PC-9 (cell line): ENCODE measurements at regions of chr20 and their contacts with region 1.

Region 1: GRCh38 chr20:41425180-41425884 is 58.7 kb upstream of the EMILIN3 start:
- DNase-seq: no peak
- H3K4me3 ChIP-seq: no peak overlapping the region
- H3K27ac ChIP-seq: no peak overlapping the region
- H3K4me1 ChIP-seq: no peaks in the 10 kb centered on the region
- H3K27me3 ChIP-seq: no peaks in the 10 kb centered on the region
- CTCF ChIP-seq: no peak

Region 2: DNA sequence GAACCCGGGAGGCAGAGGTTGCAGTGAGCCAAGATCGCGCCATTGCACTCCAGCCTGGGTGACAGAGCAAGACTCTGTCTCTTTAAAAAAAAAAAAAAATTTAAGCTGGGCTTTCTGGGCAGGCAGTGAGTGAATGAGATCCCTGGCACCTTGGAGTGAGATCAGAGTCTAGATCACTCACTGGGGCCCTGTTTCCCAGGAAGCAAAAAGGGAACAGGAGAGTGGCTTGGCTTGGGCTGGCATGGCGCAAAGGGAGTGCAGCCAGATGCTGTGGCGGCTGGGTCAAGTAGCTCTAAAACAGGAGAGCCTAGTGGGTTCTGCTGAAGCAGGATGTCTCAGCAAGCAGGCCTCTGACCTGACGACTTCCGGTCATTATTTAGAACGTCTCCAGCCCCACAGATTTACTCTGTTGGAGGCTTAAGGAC is 277.6 kb before region 1 on chr20:
- CTCF ChIA-PET with region 1: no interaction called
- POLR2A ChIA-PET with region 1: interaction called, 16 read pairs
- intact Hi-C with region 1: no loop called
- DNase-seq: no peak
- H3K4me3 ChIP-seq: no peak overlapping the region
- H3K27ac ChIP-seq: no peak overlapping the region
- H3K4me1 ChIP-seq: peaks cover 7% of the 10 kb centered on the region; the same call in 1 of the 2 replicates
- H3K27me3 ChIP-seq: no peaks in the 10 kb centered on the region
- CTCF ChIP-seq: no peak

Region 3: GRCh38 chr20:41365777-41366598 is 59.3 kb before region 1 on chr20:
- CTCF ChIA-PET with region 1: no interaction called
- POLR2A ChIA-PET with region 1: no interaction called
- intact Hi-C with region 1: no loop called
- DNase-seq: no peak
- H3K4me3 ChIP-seq: no peak overlapping the region
- H3K27ac ChIP-seq: no peak overlapping the region
- H3K4me1 ChIP-seq: no peaks in the 10 kb centered on the region
- H3K27me3 ChIP-seq: peaks cover under 1% of the 10 kb centered on the region; the same call in 1 of the 2 replicates
- CTCF ChIP-seq: no peak

Region 4: GRCh38 chr20:41456351-41456750 is 31.0 kb after region 1 on chr20:
- CTCF ChIA-PET with region 1: interaction called, 19 read pairs
- POLR2A ChIA-PET with region 1: no interaction called
- intact Hi-C with region 1: no loop called
- DNase-seq: no peak
- H3K4me3 ChIP-seq: no peak overlapping the region
- H3K27ac ChIP-seq: no peak overlapping the region
- H3K4me1 ChIP-seq: no peaks in the 10 kb centered on the region
- H3K27me3 ChIP-seq: no peaks in the 10 kb centered on the region
- CTCF ChIP-seq: no peak

Region 5: DNA sequence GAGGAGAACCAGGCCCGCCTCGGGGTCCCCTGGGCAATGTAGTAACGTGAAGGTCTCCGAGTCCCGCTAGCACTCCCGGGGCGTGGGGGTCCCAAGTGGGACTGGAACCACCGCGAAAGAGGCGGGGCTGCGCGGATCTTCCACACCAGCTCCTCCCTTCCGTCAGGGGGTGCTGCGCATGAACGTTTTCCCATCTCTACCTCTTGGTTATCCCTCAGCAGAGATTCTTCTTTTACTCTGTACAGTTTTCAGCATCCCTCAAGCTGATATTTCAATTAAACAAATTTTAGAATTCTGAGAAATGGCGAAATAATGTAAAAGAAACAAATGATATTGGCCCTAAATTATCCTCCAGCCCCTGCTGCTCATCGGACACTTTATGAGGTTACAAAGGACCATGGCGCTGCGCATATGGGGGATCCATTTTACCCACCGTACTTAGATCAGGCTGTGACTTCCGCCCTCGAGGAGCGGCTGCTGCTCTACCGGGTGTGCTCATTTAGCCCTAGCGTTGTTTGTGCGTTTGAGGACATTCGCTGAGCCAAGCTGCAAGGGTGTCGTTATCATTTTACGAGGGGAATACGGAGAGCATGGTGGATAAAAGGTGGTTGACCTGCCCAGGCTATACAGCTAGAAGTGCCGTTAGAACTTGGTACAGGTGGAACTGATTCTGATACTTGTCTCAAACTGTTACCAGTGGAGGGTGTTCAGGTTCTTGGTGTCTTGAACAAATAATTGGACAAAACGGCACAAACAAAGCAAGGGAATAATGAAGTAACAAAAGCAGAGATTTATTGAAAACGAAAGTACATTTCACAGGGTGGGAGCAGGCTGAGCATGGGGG is 268.0 kb after region 1 on chr20:
- CTCF ChIA-PET with region 1: no interaction called
- POLR2A ChIA-PET with region 1: no interaction called
- intact Hi-C with region 1: no loop called
- DNase-seq: peak; percentile 76 to 87
- H3K4me3 ChIP-seq: peak overlapping the region; percentile 83
- H3K27ac ChIP-seq: peak overlapping the region; percentile 52
- H3K4me1 ChIP-seq: peaks cover 12% of the 10 kb centered on the region
- H3K27me3 ChIP-seq: peaks cover 15% of the 10 kb centered on the region; the same call in 1 of the 2 replicates
- CTCF ChIP-seq: peak; percentile 66; the same call in 1 of the 2 replicates